Left ventricle myocardium superior (tissue), 1 donor: ENCODE measurements at regions of chr2 and their contacts with region 1.

Region 1: DNA sequence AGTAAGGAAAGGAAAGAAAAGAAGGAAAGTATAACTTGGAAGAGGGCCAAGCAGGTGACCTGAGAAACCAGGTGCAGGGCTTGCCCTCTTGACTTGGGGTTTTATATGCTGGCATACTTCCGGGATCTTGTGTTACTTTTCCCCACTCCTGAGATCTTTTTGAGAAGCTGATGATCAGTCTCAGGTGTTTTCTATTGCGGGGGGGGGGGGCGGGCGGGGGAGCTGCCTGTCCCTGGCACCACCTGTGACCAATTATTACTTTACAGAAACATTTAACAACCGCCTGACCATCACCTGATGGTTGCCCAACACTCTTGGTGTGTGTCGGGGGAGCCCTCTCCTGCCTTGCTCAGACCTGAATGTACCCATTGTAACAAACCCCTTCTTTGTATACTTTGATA is 6.9 kb upstream of the CASP10 start:
- DNase-seq: no peak
- ATAC-seq: no peak

Region 2: GRCh38 chr2:200864176-200864976 is 311.7 kb before region 1 on chr2 and contains the start of gene CLK1:
- intact Hi-C with region 1: no loop called
- DNase-seq: peak; percentile 99
- ATAC-seq: peak; percentile 94
- total RNA-seq, gene CLK1: 54.9 TPM

Region 3: GRCh38 chr2:200901459-200902072 is 274.5 kb before region 1 on chr2:
- intact Hi-C with region 1: loop called (anchors 5 kb)
- DNase-seq: no peak
- ATAC-seq: peak; percentile 78

Region 4: GRCh38 chr2:201558665-201559064 is 382.6 kb after region 1 on chr2:
- intact Hi-C with region 1: no loop called
- DNase-seq: no peak
- ATAC-seq: no peak